ENCODE measurements at regions of chr4 and their contacts with region 1.

Region 1: DNA sequence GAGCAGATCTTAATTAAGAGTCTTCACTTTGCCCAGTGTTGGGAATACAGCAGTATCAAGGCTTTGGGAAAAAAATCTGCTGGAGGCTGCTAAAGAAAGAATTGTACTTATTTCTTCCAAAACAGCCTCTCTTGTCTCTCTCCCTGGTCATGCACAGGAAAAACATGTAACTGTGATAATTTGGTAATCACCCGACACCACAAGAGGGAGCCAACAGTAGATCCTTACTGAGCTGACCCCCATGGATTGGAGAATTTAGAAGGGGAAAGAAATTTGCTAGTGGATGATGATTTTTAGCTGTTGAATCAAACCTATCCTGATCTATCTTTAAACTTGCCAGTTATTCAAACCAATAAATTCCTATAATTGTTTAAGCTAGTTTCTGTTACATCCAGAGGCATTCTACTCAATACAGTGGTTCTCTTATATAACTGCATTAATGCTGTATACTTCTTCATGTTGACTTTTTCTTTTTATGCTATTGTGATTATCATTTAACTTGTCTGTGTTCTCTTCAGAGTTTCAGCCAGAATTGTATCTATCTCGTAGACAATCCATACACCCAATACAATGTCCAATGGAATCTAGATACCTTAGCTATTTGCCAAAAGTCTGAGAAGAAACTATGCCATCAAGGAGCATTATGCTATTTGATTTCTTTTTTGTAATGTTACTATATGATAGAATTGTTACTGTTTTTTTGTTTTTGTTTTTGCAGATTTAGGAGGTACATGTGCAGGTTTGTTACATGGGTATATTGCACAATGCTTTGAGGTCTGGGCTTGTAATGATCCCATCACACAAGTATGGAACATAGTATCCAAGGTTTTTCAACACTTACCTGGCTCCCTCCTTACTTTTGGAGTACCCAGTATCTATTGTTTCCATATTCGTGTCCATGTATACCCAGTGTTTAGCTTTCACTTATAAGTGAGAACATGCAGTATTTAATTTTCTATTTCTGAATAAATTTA is 31.3 kb upstream of the ARHGEF38 start:
- DNase-seq: no peak
- ATAC-seq: peak in 2 of 4 donors; percentile 70
- H3K4me3 ChIP-seq: no peak overlapping the region
- H3K27ac ChIP-seq: no peak overlapping the region
- H3K4me1 ChIP-seq: no peaks in the 10 kb centered on the region
- H3K27me3 ChIP-seq: no peaks in the 10 kb centered on the region
- CTCF ChIP-seq: peak; percentile 65

Region 2: DNA sequence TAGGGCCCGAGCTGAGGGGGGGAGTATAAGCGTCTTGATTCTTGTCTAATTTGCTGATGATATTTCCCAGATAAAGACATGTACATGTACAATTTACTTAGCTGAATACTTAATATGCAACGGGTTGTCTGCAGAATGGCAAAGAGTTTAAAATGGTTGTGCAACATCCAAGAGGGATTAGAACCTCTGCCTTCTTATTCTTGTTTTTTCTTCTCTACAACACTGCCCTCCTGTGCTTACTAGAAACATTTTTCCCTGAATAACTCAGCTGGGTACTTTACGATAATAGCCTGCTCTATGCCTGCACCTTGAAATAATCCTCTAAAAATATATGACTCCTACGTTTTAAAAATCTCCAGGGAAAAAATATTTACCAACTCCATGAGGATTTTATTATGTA is 145.6 kb after region 1 on chr4:
- intact Hi-C with region 1: loop called (anchors 5 to 10 kb)
- DNase-seq: no peak
- ATAC-seq: peak in 2 of 4 donors; percentile 65 to 71
- H3K4me3 ChIP-seq: no peak overlapping the region
- H3K27ac ChIP-seq: no peak overlapping the region
- H3K4me1 ChIP-seq: no peaks in the 10 kb centered on the region
- H3K27me3 ChIP-seq: no peaks in the 10 kb centered on the region
- CTCF ChIP-seq: peak; percentile 28